ENCODE measurements at regions of chr7 and their contacts with region 1.

Region 1: GRCh38 chr7:45259966-45260646 is 102.5 kb downstream of the RAMP3 start:
- DNase-seq: peak; percentile 1
- H3K4me3 ChIP-seq: no peak overlapping the region
- H3K27ac ChIP-seq: no peak overlapping the region
- H3K27me3 ChIP-seq: peaks cover 6% of the 10 kb centered on the region
- CTCF ChIP-seq: peak; percentile 97

Region 2: GRCh38 chr7:45157653-45158401 is 102.3 kb before region 1 on chr7 and contains the start of gene RAMP3:
- CTCF ChIA-PET with region 1: interaction called, 59 read pairs
- POLR2A ChIA-PET with region 1: no interaction called
- DNase-seq: no peak
- H3K4me3 ChIP-seq: no peak within 1 kb of the TSS
- H3K27ac ChIP-seq: no peak within 1 kb of the TSS
- H3K27me3 ChIP-seq: peaks cover 43% of the 10 kb centered on the region
- CTCF ChIP-seq: no peak
- polyA plus RNA-seq, gene RAMP3: not detected in 2 replicates